G401 (cell line): ENCODE measurements at regions of chr20 and their contacts with region 1.

Region 1: DNA sequence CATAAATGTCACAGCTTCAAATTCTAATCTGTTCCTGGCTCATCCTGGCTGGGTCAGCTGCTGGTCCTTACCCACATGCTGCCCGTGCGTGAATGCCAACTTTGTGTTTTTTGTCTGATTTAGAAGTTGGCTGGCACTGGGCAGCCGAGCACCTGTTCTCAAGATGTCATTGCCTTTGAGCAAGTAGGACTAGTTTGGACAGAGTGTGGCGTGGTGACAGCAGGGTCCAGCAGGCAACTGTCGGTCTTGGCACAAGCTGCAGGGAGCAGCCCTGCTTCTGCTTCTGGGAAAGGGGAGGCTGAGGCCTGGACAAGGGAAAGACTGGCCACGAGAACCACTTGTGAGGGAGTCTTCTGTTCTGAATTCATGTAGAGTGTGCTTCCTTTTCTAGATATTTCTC is 26.4 kb upstream of the ADRM1 start:
- DNase-seq: peak; percentile 99

Region 2: GRCh38 chr20:62010551-62011402 is 265.7 kb before region 1 on chr20:
- in situ Hi-C with region 1: loop called (anchors 25 kb)
- DNase-seq: peak; percentile 73

Region 3: DNA sequence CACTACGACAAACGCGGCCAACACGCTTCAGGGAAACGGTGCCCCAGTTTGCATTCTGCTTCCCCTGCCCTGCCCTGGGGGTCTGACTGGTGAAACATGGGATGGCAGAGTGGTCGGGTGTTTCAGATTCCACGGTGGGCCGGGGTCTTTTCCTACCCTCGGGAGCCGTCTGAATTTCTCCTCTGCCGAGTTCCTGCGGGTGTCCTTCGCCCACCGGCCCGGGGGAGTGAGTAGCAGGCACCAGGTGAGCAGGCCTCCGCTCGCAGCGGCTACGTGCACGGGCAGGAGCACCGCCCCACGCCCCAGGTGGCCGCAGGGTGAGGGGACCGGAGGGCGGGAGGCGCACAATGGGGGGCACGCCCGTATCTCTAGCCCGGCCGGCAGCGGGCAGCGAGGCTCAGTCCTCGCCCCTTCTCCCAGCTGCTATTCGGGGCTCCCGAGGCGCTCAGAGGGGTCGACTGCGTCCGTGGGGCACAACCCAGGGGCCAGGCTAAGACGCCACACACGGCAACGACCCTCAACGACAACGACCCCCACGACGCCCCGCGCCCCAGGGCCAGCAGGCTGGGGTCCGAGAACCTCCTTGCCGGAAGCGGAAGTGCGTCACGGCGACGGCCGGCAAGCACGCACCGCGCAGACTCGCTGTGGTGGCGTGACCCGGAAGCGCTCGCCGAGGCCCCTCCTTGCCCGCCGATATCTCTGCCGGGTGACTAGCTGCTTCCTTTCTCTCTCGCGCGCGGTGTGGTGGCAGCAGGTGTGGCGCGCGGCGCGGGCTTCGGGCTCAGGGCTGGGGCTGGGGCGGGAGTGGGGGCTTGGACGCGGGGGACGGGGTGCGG is 110.2 kb after region 1 on chr20 and contains the start of gene RPS21:
- in situ Hi-C with region 1: no loop called
- DNase-seq: peak; percentile 90
- total RNA-seq, gene RPS21: 1,245 and 1,753 TPM in 2 replicates